Ascending aorta (tissue), 2 donors: ENCODE measurements at regions of chr10 and their contacts with region 1.

Region 1: DNA sequence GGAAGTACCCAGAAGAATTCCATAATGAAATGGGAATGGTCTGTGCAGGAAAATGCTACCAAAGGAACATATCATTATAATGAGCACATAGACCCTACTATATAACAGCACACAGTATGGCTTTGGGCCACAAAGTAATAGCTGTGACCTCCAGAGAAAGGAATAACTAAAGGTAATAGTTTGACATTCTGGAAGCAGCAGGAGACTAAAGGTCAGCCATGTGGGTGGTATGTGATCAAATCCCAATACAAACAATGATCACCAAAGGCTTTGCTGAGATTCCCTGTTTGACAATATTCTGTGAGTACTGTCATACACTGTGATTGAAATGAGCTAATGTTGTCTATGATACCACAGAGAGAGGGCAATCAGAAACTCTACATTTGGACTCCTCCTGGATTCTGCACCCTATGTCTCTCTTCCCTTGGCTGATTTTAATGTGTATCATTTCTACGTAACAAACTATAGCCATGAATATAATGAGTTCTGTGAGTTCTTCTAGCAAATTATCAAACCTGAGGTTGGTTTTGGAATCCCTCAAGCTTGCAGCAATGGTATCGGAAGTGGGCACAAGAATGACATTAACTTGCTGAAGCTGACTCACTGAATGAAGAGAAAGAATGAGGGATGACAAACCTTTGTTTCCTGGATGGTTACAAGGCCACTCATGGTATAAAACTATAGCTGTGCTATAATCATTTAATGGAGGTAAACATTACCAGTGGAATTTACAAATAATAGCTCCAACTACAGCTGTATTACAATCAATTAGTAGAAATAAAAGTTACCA is 99.6 kb downstream of the JMJD1C start:
- DNase-seq: no peak
- H3K4me3 ChIP-seq: no peak overlapping the region
- H3K27ac ChIP-seq: no peak overlapping the region
- H3K4me1 ChIP-seq: no peaks in the 10 kb centered on the region
- H3K27me3 ChIP-seq: no peaks in the 10 kb centered on the region
- CTCF ChIP-seq: no peak

Region 2: GRCh38 chr10:63300801-63301200 is 65.4 kb before region 1 on chr10:
- intact Hi-C with region 1: loop called (anchors 10 kb)
- DNase-seq: no peak
- H3K4me3 ChIP-seq: no peak overlapping the region
- H3K27ac ChIP-seq: no peak overlapping the region
- H3K4me1 ChIP-seq: peaks cover 0 to 3% of the 10 kb centered on the region in 2 donors
- H3K27me3 ChIP-seq: no peaks in the 10 kb centered on the region
- CTCF ChIP-seq: no peak